H1 (cell line): ENCODE measurements at regions of chr6 and their contacts with region 1.

Region 1: GRCh38 chr6:217048-217659 is 75.1 kb upstream of the DUSP22 start:
- DNase-seq: peak; percentile 36 to 90
- H3K4me3 ChIP-seq: no peak overlapping the region
- H3K27ac ChIP-seq: no peak overlapping the region
- H3K4me1 ChIP-seq: peaks cover 0 to 4% (median 3%) of the 10 kb centered on the region in 4 experiments; a peak in 1 of 7 replicates
- H3K27me3 ChIP-seq: peaks cover 0 to 2% (median 0%) of the 10 kb centered on the region in 4 experiments; a peak in 1 of 7 replicates
- CTCF ChIP-seq: peak; percentile 88 to 92 (median 91)
- EP300 ChIP-seq: no peak
- POLR2A ChIP-seq: no peak
- RAD21 ChIP-seq: peak; percentile 70 to 76

Region 2: GRCh38 chr6:227074-227782 is 10.1 kb after region 1 on chr6:
- CTCF ChIA-PET with region 1: interaction called, 29 read pairs
- POLR2A ChIA-PET with region 1: no interaction called
- DNase-seq: no peak
- H3K4me3 ChIP-seq: no peak overlapping the region
- H3K27ac ChIP-seq: no peak overlapping the region
- H3K4me1 ChIP-seq: peaks cover 0 to 5% (median 3%) of the 10 kb centered on the region in 4 experiments; a peak in 5 of 7 replicates
- H3K27me3 ChIP-seq: no peaks in the 10 kb centered on the region
- CTCF ChIP-seq: no peak
- EP300 ChIP-seq: no peak
- POLR2A ChIP-seq: no peak
- RAD21 ChIP-seq: peak; percentile 21 to 44; a peak in 3 of 4 replicates

Region 3: GRCh38 chr6:235763-236360 is 18.7 kb after region 1 on chr6:
- CTCF ChIA-PET with region 1: interaction called, 46 read pairs
- POLR2A ChIA-PET with region 1: no interaction called
- DNase-seq: no peak
- H3K4me3 ChIP-seq: peak overlapping the region in 1 of 4 experiments; percentile 46; a peak in 2 of 8 replicates
- H3K27ac ChIP-seq: no peak overlapping the region
- H3K4me1 ChIP-seq: peaks cover 0 to 13% (median 6%) of the 10 kb centered on the region in 4 experiments; a peak in 4 of 7 replicates
- H3K27me3 ChIP-seq: no peaks in the 10 kb centered on the region
- CTCF ChIP-seq: no peak
- EP300 ChIP-seq: no peak
- POLR2A ChIP-seq: no peak
- RAD21 ChIP-seq: no peak

Region 4: DNA sequence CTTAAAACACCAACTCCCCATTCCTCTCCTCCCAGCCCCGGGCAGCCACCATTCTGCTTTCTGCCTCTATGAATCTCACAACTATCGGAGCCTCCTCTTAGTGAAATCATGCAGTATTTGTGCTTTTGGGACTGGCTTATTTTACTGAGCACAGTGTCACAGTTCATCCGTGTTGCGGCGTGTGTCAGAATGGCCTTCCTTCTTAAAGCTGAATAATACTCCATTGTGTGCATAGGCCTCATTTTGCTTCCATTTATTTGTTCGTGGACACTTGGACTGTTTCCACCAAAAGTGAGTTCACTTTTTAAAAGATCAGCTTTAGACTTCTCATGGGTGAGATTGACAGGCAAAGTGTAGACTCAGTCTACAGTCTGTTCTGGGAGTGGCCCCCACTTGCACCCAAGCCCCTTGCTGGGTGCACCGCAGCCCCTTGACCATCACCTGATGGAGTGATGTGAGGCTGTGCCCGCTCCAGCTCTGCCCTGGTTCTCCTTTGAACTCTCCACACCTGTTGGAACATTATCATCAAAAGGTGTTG is 87.7 kb after region 1 on chr6:
- CTCF ChIA-PET with region 1: no interaction called
- POLR2A ChIA-PET with region 1: no interaction called
- DNase-seq: no peak
- H3K4me3 ChIP-seq: no peak overlapping the region
- H3K27ac ChIP-seq: no peak overlapping the region
- H3K4me1 ChIP-seq: peaks cover 0 to 3% (median 0%) of the 10 kb centered on the region in 4 experiments; a peak in 2 of 7 replicates
- H3K27me3 ChIP-seq: no peaks in the 10 kb centered on the region; a peak in 2 of 7 replicates
- CTCF ChIP-seq: no peak
- EP300 ChIP-seq: no peak
- POLR2A ChIP-seq: no peak
- RAD21 ChIP-seq: no peak

Region 5: DNA sequence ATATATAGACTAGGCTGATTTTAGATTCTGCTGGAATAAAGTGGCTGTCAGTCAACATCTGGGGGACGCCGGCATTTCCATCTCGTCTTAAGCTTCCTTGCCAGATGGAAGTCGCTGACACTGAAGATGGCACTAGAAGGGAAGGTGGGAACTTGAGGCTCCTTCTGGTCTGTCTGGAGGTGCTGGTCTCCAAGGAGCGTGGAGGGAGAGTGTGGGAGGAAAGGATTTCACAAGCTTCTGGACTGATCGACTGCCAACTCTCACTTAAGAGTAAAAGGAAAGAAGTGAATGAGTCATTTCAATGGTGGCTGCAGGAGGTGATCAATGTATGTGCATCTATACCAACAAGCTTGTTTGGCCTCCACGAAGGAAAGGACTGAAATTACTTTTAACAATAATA is 115.5 kb after region 1 on chr6:
- CTCF ChIA-PET with region 1: interaction called, 10 read pairs
- POLR2A ChIA-PET with region 1: no interaction called
- DNase-seq: no peak
- H3K4me3 ChIP-seq: no peak overlapping the region
- H3K27ac ChIP-seq: no peak overlapping the region
- H3K4me1 ChIP-seq: no peaks in the 10 kb centered on the region
- H3K27me3 ChIP-seq: no peaks in the 10 kb centered on the region; a peak in 1 of 7 replicates
- CTCF ChIP-seq: no peak
- EP300 ChIP-seq: no peak
- POLR2A ChIP-seq: no peak
- RAD21 ChIP-seq: no peak